Activated naive CD4-positive, alpha-beta T cell treated with anti-CD3 and anti-CD28 coated beads for 36 hours (primary cell): ENCODE measurements at regions of chr1 and their contacts with region 1.

Region 1: GRCh38 chr1:37692078-37692833 is at the start of gene CDCA8:
- DNase-seq: peak; percentile 99
- H3K4me3 Mint-ChIP-seq: peak within 1 kb of the TSS; percentile 97
- H3K27ac Mint-ChIP-seq: peak within 1 kb of the TSS; percentile 87
- H3K4me1 Mint-ChIP-seq: peaks cover 35% of the 10 kb centered on the region
- H3K27me3 Mint-ChIP-seq: no peaks in the 10 kb centered on the region
- total RNA-seq, gene CDCA8: 73.6 to 78.6 TPM

Region 2: GRCh38 chr1:36731226-36732014 is 960.8 kb before region 1 on chr1:
- CTCF ChIA-PET with region 1: no interaction called
- intact Hi-C with region 1: no loop called
- DNase-seq: peak; percentile 10
- H3K4me3 Mint-ChIP-seq: no peak overlapping the region
- H3K27ac Mint-ChIP-seq: no peak overlapping the region
- H3K4me1 Mint-ChIP-seq: no peaks in the 10 kb centered on the region
- H3K27me3 Mint-ChIP-seq: peaks cover 34% of the 10 kb centered on the region

Region 3: GRCh38 chr1:37479255-37480124 is 212.8 kb before region 1 on chr1:
- CTCF ChIA-PET with region 1: no interaction called
- intact Hi-C with region 1: loop called (anchors 1 kb)
- DNase-seq: peak; percentile 97
- H3K4me3 Mint-ChIP-seq: peak overlapping the region; percentile 87
- H3K27ac Mint-ChIP-seq: peak overlapping the region; percentile 99
- H3K4me1 Mint-ChIP-seq: peaks cover 35% of the 10 kb centered on the region
- H3K27me3 Mint-ChIP-seq: no peaks in the 10 kb centered on the region

Region 4: GRCh38 chr1:37612200-37612599 is 80.1 kb before region 1 on chr1:
- CTCF ChIA-PET with region 1: no interaction called
- intact Hi-C with region 1: no loop called
- DNase-seq: no peak
- H3K4me3 Mint-ChIP-seq: no peak overlapping the region
- H3K27ac Mint-ChIP-seq: no peak overlapping the region
- H3K4me1 Mint-ChIP-seq: no peaks in the 10 kb centered on the region
- H3K27me3 Mint-ChIP-seq: peaks cover 8% of the 10 kb centered on the region

Region 5: GRCh38 chr1:37676281-37677243 is 15.7 kb before region 1 on chr1:
- CTCF ChIA-PET with region 1: interaction called, 7 read pairs
- intact Hi-C with region 1: loop called (anchors 1 kb)
- DNase-seq: no peak
- H3K4me3 Mint-ChIP-seq: no peak overlapping the region
- H3K27ac Mint-ChIP-seq: no peak overlapping the region
- H3K4me1 Mint-ChIP-seq: peaks cover 20% of the 10 kb centered on the region
- H3K27me3 Mint-ChIP-seq: no peaks in the 10 kb centered on the region

Region 6: DNA sequence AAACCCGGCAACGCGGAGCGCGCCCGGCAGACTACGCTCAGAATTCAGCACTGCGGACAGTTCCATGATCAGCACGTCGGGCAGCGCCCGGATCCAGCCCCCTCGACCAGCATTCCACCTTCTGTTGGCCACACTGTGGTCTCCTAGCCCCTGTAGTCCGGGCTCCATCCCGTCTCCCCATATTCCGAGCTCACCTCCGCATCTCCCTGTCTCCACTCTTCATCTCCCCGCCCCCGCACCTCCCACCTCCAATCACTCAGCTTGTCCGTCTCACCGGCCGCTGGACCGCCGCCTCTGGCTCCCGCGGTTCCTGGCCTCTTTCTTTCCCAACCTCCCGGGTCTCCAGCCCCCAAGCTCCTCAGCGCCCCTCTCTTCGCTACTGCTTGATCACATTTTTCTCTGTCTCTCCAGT is 72.2 kb after region 1 on chr1:
- CTCF ChIA-PET with region 1: no interaction called
- intact Hi-C with region 1: loop called (anchors 2 kb)
- DNase-seq: peak; percentile 71
- H3K4me3 Mint-ChIP-seq: no peak overlapping the region
- H3K27ac Mint-ChIP-seq: no peak overlapping the region
- H3K4me1 Mint-ChIP-seq: peaks cover 23% of the 10 kb centered on the region
- H3K27me3 Mint-ChIP-seq: peaks cover 64% of the 10 kb centered on the region

Region 7: GRCh38 chr1:37931361-37932158 is 239.3 kb after region 1 on chr1:
- CTCF ChIA-PET with region 1: no interaction called
- intact Hi-C with region 1: loop called (anchors 1 kb)
- DNase-seq: peak; percentile 99
- H3K4me3 Mint-ChIP-seq: peak overlapping the region; percentile 93
- H3K27ac Mint-ChIP-seq: peak overlapping the region; percentile 65
- H3K4me1 Mint-ChIP-seq: peaks cover 46% of the 10 kb centered on the region
- H3K27me3 Mint-ChIP-seq: no peaks in the 10 kb centered on the region

Region 8: DNA sequence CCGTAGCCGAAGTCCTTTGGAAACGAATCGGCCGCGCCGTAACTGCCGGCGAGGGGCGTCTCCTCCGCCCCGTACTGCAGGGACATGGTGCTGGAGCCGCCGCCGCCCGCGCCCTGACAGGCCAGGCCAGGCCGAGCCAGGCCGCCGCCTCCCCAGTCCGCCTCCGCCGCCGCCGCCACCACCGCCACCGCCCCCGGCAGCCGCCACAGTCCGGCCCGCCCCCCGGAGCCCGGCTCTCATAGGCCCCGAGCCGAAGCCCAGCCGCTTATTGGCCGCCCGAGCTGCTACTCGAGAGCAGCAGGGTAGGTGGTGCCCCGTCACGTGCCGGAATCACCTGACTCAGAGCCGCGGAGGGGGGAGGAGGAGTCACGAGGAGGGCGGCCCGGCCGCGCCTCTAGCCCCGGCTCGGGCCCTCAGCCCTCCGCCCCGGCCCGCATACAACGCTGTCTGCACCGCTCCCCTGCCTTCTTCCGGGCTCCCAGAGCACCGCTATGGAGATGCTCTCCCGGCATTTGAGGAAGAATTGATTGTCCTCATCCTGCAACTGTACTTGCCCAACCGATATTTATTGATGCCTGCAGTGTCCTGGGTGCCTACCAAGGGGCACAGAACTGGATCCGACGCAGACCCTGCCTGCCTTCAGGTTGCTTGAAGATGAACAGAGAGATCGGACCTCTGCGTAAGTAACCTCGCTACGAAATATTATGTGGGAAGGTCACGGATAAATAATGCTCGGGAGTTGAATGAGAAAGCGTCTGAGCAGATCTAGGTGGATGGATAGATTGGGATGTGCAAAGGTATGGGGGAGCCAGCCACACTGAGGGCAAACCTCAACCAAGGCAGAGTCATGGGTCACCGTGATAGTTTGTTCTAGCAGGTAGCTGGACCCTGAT is 1167.6 kb after region 1 on chr1 and contains the start of gene RRAGC:
- CTCF ChIA-PET with region 1: no interaction called
- intact Hi-C with region 1: loop called (anchors 2 kb)
- DNase-seq: peak; percentile 99
- H3K4me3 Mint-ChIP-seq: peak within 1 kb of the TSS; percentile 86
- H3K27ac Mint-ChIP-seq: peak within 1 kb of the TSS; percentile 91
- H3K4me1 Mint-ChIP-seq: peaks cover 51% of the 10 kb centered on the region
- H3K27me3 Mint-ChIP-seq: no peaks in the 10 kb centered on the region
- total RNA-seq, gene RRAGC: 22.3 to 23.3 TPM